Endothelial cell of umbilical vein (primary cell): ENCODE measurements at regions of chr14 and their contacts with region 1.

Region 1: GRCh38 chr14:52706724-52707706 is at the start of gene PSMC6:
- DNase-seq: peak; percentile 94
- H3K4me3 ChIP-seq: peak within 1 kb of the TSS; percentile 40 to 96 (median 47)
- H3K27ac ChIP-seq: peak within 1 kb of the TSS; percentile 82
- H3K4me1 ChIP-seq: peaks cover 19% of the 10 kb centered on the region
- H3K27me3 ChIP-seq: no peaks in the 10 kb centered on the region
- CTCF ChIP-seq: no peak
- POLR2A ChIP-seq: peak; percentile 81
- total RNA-seq, gene PSMC6: 92.1 and 103 TPM in 2 replicates

Region 2: GRCh38 chr14:52313903-52314594 is 393.0 kb before region 1 on chr14 and contains the start of gene PTGER2:
- CTCF ChIA-PET with region 1: no interaction called
- POLR2A ChIA-PET with region 1: no interaction called
- dilution Hi-C with region 1: no loop called
- intact Hi-C with region 1: loop called (anchors 5 kb)
- DNase-seq: peak; percentile 60
- H3K4me3 ChIP-seq: peak within 1 kb of the TSS in 2 of 3 experiments; percentile 24 to 30
- H3K27ac ChIP-seq: no peak within 1 kb of the TSS
- H3K4me1 ChIP-seq: peaks cover 11% of the 10 kb centered on the region
- H3K27me3 ChIP-seq: peaks cover 55 to 68% of the 10 kb centered on the region in 2 experiments
- CTCF ChIP-seq: no peak
- POLR2A ChIP-seq: no peak
- total RNA-seq, gene PTGER2: not detected in 2 replicates

Region 3: DNA sequence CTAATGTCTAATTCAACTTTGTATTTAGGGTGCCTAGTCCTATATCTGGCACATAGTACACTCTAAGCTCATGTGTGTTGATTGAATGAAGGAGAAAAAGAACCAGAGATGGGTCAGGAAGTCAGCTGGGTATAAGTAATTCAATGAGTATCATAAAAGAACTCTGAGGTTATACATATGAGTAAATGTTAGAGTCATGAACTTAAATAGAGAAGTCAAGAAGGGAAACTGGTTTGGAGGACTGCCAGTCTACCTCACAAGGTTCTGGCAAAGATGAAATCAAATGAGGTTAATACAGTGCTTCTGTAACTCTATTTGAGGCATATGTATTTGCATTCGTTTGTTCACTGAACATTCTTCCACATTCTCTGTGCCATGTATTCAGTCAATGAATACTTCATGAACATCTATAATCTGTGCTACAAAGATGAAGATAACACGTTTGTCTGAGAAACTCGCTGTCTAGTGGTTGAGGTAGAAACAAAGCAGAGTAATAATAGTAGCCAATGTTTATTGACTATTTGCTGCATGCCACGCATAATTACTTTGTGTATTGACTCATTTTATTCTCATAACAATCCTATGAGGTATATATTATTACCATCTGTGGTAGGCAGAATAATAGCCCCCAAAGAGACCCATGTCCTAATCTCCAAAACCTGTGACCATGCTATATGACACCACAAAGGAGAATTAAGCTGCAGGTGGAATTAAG is 304.0 kb before region 1 on chr14:
- CTCF ChIA-PET with region 1: no interaction called
- POLR2A ChIA-PET with region 1: no interaction called
- dilution Hi-C with region 1: no loop called
- intact Hi-C with region 1: no loop called
- DNase-seq: no peak
- H3K4me3 ChIP-seq: no peak overlapping the region
- H3K27ac ChIP-seq: no peak overlapping the region
- H3K4me1 ChIP-seq: no peaks in the 10 kb centered on the region
- H3K27me3 ChIP-seq: peaks cover 2 to 13% of the 10 kb centered on the region in 2 experiments
- CTCF ChIP-seq: no peak
- POLR2A ChIP-seq: no peak

Region 4: DNA sequence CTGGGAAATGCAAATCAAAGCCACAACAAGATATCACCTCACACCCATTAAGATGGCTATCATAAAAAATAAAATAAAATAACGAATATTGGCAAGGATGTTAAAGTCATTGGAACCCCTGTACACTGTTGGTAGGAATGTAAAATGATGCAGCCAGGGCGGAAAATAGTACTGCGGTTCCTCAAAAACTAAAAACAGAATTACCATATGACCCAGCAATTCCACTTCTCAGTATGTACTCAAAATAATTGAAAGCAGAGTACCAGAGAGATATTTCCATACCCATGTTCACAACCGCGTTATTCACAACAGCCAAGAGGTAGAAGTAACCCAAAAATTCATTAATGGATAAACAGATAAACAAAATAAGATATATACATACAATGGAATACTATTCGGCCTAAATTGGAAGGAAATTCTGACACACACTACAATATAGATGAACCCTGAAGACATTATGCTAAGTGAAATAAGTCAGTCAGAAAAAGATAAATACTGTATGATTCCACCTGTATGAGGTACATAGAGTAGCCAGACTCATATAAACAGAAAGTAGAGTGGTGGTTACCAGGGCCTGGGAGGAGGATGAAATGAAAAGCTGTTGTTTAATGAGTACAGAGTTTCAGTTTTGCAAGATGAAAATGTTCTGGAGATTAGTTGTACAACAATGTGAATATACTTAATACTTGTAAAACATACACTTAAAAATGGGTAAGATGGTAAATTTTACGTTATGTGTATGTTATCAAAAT is 239.3 kb before region 1 on chr14:
- CTCF ChIA-PET with region 1: no interaction called
- POLR2A ChIA-PET with region 1: no interaction called
- dilution Hi-C with region 1: no loop called
- intact Hi-C with region 1: loop called (anchors 1 kb)
- DNase-seq: no peak
- H3K4me3 ChIP-seq: no peak overlapping the region
- H3K27ac ChIP-seq: no peak overlapping the region
- H3K4me1 ChIP-seq: no peaks in the 10 kb centered on the region
- H3K27me3 ChIP-seq: no peaks in the 10 kb centered on the region
- CTCF ChIP-seq: no peak
- POLR2A ChIP-seq: no peak

Region 5: GRCh38 chr14:52724360-52724644 is 17.3 kb after region 1 on chr14:
- CTCF ChIA-PET with region 1: interaction called, 13 read pairs
- POLR2A ChIA-PET with region 1: interaction called, 3 read pairs
- dilution Hi-C with region 1: no loop called
- intact Hi-C with region 1: no loop called
- DNase-seq: no peak
- H3K4me3 ChIP-seq: no peak overlapping the region
- H3K27ac ChIP-seq: no peak overlapping the region
- H3K4me1 ChIP-seq: no peaks in the 10 kb centered on the region
- H3K27me3 ChIP-seq: no peaks in the 10 kb centered on the region
- CTCF ChIP-seq: no peak
- POLR2A ChIP-seq: no peak

Region 6: GRCh38 chr14:52729925-52730667 is 23.1 kb after region 1 on chr14 and contains the start of gene STYX:
- CTCF ChIA-PET with region 1: interaction called, 13 read pairs
- POLR2A ChIA-PET with region 1: interaction called, 5 read pairs
- dilution Hi-C with region 1: no loop called
- intact Hi-C with region 1: loop called (anchors 2 kb)
- DNase-seq: peak; percentile 99
- H3K4me3 ChIP-seq: peak within 1 kb of the TSS; percentile 50 to 98 (median 88)
- H3K27ac ChIP-seq: peak within 1 kb of the TSS; percentile 29
- H3K4me1 ChIP-seq: peaks cover 3% of the 10 kb centered on the region
- H3K27me3 ChIP-seq: no peaks in the 10 kb centered on the region
- CTCF ChIP-seq: no peak
- POLR2A ChIP-seq: peak; percentile 78
- total RNA-seq, gene STYX: 21.0 and 21.3 TPM in 2 replicates